GM12878 (cell line): ENCODE measurements at regions of chr16 and their contacts with region 1.

Region 1: GRCh38 chr16:72124761-72125634 is 31.4 kb downstream of the DHX38 start:
- DNase-seq: peak; percentile 26
- ATAC-seq: peak; percentile 95
- H3K4me3 ChIP-seq: no peak overlapping the region
- H3K27ac ChIP-seq: no peak overlapping the region
- H3K4me1 ChIP-seq: no peaks in the 10 kb centered on the region; the same call in 1 of the 2 replicates
- H3K27me3 ChIP-seq: no peaks in the 10 kb centered on the region
- CTCF ChIP-seq: peak; percentile 76 to 92 (median 82); a peak in 5 of 6 replicates
- EP300 ChIP-seq: no peak
- POLR2A ChIP-seq: no peak
- RAD21 ChIP-seq: peak; percentile 93

Region 2: DNA sequence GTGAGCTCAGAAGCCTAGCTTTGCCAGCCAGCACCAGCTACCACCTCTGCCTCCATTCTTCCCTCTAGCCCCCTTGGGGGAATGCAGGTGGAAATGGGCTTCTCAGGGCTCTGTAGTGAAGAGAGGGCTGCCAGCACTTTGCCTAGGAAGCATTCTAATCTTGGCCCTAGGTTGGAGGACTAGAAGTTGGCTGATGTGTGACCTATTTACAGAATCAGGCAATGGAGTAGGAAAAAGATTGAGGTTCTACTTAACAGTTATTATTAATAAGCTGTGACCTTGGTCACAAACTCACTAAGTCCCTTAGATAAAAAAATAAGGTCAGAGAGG is 11.4 kb before region 1 on chr16:
- CTCF ChIA-PET with region 1: interaction called, 11 read pairs
- POLR2A ChIA-PET with region 1: no interaction called
- RAD21 ChIA-PET with region 1: interaction called, 4 read pairs
- SMC1A ChIA-PET with region 1: interaction called, 3 read pairs
- in situ Hi-C with region 1: no loop called
- intact Hi-C with region 1: no loop called
- DNase-seq: no peak
- ATAC-seq: no peak
- H3K4me3 ChIP-seq: no peak overlapping the region
- H3K27ac ChIP-seq: no peak overlapping the region
- H3K4me1 ChIP-seq: no peaks in the 10 kb centered on the region
- H3K27me3 ChIP-seq: no peaks in the 10 kb centered on the region
- CTCF ChIP-seq: no peak
- EP300 ChIP-seq: no peak
- POLR2A ChIP-seq: no peak
- RAD21 ChIP-seq: no peak

Region 3: GRCh38 chr16:72149676-72150464 is 24.9 kb after region 1 on chr16:
- CTCF ChIA-PET with region 1: interaction called, 13 read pairs
- POLR2A ChIA-PET with region 1: no interaction called
- RAD21 ChIA-PET with region 1: interaction called, 3 read pairs
- SMC1A ChIA-PET with region 1: interaction called, 5 read pairs
- in situ Hi-C with region 1: no loop called
- intact Hi-C with region 1: no loop called
- DNase-seq: no peak
- ATAC-seq: peak; percentile 68
- H3K4me3 ChIP-seq: no peak overlapping the region
- H3K27ac ChIP-seq: no peak overlapping the region
- H3K4me1 ChIP-seq: peaks cover 10% of the 10 kb centered on the region; the same call in 1 of the 2 replicates
- H3K27me3 ChIP-seq: no peaks in the 10 kb centered on the region
- CTCF ChIP-seq: no peak
- EP300 ChIP-seq: 0 out of 4 replicates have a peak, but pooled peaks of 1 of the 2 experiments have one; percentile 13
- POLR2A ChIP-seq: no peak
- RAD21 ChIP-seq: 0 out of 2 replicates have a peak, but pooled peaks have one; percentile 12

Region 4: DNA sequence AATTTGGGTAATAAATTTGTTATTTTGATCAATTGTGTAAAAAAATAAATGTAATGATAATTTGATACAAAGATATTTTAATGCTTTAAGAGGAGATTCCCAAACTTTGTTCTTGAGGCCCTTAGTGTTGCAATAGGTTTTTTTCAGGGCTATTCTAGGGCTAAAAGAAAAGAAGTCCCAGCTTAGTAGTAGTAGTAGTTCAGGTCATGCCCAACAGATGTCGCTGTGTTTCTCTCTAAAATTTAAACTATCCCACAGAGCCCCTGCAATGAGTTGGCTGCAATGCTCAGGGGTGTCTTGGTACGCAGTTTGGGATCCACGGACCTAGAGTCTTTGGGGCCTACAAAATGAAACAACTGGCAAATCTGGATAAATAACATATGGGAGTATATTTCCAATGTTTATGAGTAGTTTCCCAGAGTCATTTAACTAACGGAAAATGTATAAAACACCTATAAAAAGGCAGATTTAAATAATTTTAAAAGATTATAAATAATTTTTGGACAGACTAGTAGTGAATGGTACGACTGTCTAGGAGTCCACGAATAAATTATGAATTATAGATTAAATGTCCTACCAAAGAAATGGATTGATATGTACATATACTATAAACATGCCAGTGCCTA is 275.4 kb after region 1 on chr16:
- CTCF ChIA-PET with region 1: interaction called, 12 read pairs
- POLR2A ChIA-PET with region 1: no interaction called
- RAD21 ChIA-PET with region 1: interaction called, 4 read pairs
- SMC1A ChIA-PET with region 1: interaction called, 3 read pairs
- in situ Hi-C with region 1: no loop called
- intact Hi-C with region 1: no loop called
- DNase-seq: peak; percentile 7
- ATAC-seq: peak; percentile 88
- H3K4me3 ChIP-seq: no peak overlapping the region
- H3K27ac ChIP-seq: no peak overlapping the region
- H3K4me1 ChIP-seq: no peaks in the 10 kb centered on the region
- H3K27me3 ChIP-seq: no peaks in the 10 kb centered on the region
- CTCF ChIP-seq: peak; percentile 57 to 75 (median 67)
- EP300 ChIP-seq: no peak
- POLR2A ChIP-seq: no peak
- RAD21 ChIP-seq: peak; percentile 54; the same call in 1 of the 2 replicates

Region 5: GRCh38 chr16:72474501-72475123 is 349.6 kb after region 1 on chr16:
- CTCF ChIA-PET with region 1: interaction called, 92 read pairs
- POLR2A ChIA-PET with region 1: no interaction called
- RAD21 ChIA-PET with region 1: interaction called, 4 read pairs
- SMC1A ChIA-PET with region 1: interaction called, 4 read pairs
- in situ Hi-C with region 1: no loop called
- intact Hi-C with region 1: no loop called
- DNase-seq: no peak
- ATAC-seq: peak; percentile 61
- H3K4me3 ChIP-seq: no peak overlapping the region
- H3K27ac ChIP-seq: no peak overlapping the region
- H3K4me1 ChIP-seq: no peaks in the 10 kb centered on the region
- H3K27me3 ChIP-seq: no peaks in the 10 kb centered on the region
- CTCF ChIP-seq: no peak
- EP300 ChIP-seq: no peak
- POLR2A ChIP-seq: no peak
- RAD21 ChIP-seq: no peak

Region 6: DNA sequence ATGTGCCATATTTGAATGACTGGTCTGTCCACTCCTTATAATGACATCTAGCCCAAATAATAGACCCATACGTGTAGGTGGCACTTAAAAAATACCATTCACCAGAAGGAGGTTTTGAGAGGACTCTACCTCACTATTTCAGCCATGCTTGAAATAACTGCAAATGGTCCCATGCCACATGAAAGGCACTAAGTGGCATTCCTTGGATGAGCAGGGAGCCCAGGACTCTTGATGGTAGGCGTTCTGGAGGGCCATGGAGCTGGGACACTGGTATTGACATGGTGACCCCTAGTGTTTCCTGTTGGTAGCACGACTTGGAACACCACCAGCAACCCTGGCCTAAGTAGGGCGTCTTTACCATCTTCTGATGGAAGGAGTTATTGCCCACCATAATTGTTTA is 1071.7 kb after region 1 on chr16:
- CTCF ChIA-PET with region 1: no interaction called
- POLR2A ChIA-PET with region 1: no interaction called
- RAD21 ChIA-PET with region 1: no interaction called
- SMC1A ChIA-PET with region 1: interaction called, 3 read pairs
- in situ Hi-C with region 1: no loop called
- intact Hi-C with region 1: loop called (anchors 10 kb)
- DNase-seq: peak; percentile 24
- ATAC-seq: peak; percentile 98
- H3K4me3 ChIP-seq: no peak overlapping the region
- H3K27ac ChIP-seq: no peak overlapping the region
- H3K4me1 ChIP-seq: no peaks in the 10 kb centered on the region
- H3K27me3 ChIP-seq: no peaks in the 10 kb centered on the region
- CTCF ChIP-seq: peak; percentile 63 to 82 (median 78)
- EP300 ChIP-seq: no peak
- POLR2A ChIP-seq: no peak
- RAD21 ChIP-seq: peak; percentile 78

Region 7: DNA sequence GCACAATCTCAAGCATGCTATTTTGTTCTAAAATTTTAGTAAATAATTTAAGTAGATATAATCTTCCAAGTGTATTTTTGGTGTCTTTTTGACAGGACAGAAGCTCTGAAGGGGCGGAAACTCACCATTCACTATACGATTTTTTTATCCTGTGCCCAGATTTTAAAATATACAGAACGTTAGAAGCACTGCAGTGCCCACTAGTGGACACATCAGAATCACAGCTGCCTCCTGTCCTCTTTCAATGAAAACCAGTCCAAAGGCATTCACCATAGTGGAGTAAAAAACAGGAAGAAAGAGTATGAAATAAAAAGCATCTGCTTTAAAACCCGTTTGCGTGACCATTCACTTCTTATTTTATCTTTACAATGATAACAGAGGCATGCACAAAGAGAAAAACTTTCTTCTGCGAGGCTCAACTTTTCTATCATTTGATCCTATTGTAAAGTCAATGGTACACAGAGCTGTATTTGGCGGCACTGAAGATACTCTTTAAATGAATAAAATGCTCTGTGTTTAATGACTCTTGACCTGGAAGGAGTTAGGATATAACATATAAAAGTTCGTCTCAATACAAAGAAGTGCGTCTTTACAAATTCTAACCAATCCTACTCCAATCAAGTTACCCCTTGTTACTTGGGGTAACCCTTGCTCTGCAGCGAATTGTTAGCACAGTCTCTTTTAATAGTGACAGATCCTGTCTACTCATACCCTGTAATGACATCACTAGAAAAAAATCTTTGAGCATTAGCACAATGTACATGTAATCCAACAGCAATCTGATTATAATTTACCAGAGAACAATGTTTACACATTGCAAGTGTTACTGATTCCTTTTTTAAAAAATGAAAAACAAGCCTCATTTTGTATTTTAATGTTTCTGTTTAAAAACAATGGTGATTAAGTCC is 1831.8 kb after region 1 on chr16:
- CTCF ChIA-PET with region 1: no interaction called
- POLR2A ChIA-PET with region 1: no interaction called
- RAD21 ChIA-PET with region 1: no interaction called
- SMC1A ChIA-PET with region 1: no interaction called
- in situ Hi-C with region 1: loop called (anchors 10 kb)
- intact Hi-C with region 1: no loop called
- DNase-seq: peak; percentile 2
- ATAC-seq: peak; percentile 82
- H3K4me3 ChIP-seq: no peak overlapping the region
- H3K27ac ChIP-seq: no peak overlapping the region
- H3K4me1 ChIP-seq: no peaks in the 10 kb centered on the region
- H3K27me3 ChIP-seq: no peaks in the 10 kb centered on the region
- CTCF ChIP-seq: peak; percentile 78 to 85 (median 78)
- EP300 ChIP-seq: no peak
- POLR2A ChIP-seq: no peak
- RAD21 ChIP-seq: peak; percentile 70